ENCODE measurements at regions of chr1 and their contacts with region 1.

Region 1: DNA sequence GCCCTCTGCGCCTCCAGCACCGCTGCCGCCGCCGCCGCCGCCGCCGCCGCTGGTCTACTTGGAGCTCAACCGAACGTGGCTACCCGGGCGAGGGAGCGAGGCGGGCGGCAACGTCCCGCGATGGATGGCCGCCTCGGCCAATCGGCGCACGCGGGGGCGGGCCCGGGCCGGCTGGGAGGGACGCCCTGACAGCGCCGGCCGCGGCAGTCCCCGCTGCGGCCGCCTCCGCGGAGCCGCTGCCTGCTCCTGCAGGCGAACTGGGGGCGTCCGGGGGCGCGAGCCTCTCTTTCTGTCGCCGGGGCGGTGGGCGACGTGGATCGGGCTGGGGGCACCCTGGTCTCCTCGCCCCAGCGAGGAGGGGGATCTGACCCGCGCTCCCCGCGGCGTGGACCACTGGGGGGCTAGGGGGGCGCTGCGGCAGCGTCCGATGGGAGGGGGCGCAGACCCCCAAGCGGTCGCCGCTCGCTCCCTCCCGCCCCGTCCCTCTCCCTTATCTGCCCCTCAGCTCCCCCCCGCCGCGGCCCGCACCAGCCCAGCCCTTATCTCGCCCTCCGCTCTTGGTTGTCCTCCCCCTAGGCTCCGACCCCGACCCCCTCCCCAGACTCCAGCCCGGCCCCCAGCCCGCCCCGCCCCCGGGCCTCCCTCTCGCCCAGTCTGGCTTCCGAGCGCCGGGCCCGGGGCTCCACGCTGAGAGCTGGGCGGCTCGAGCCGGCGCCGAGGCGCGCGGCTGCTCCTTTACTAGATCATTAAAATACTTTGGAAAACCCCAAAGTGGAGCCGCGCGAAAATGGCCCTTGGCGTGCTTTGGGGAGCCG is at the start of gene SSBP3:
- DNase-seq: peak; percentile 95
- H3K4me3 ChIP-seq: peak within 1 kb of the TSS; percentile 75 to 99 (median 94)
- H3K27ac ChIP-seq: peak within 1 kb of the TSS; percentile 96 to 100 (median 98)
- H3K4me1 ChIP-seq: peaks cover 0 to 60% (median 47%) of the 10 kb centered on the region in 4 donors
- H3K27me3 ChIP-seq: no peaks in the 10 kb centered on the region
- CTCF ChIP-seq: no peak
- EP300 ChIP-seq: no peak
- POLR2A ChIP-seq: peak; percentile 62 to 70
- total RNA-seq, gene SSBP3: 27.4 to 38.5 (median 34.8) TPM

Region 2: GRCh38 chr1:54052934-54053744 is 353.4 kb before region 1 on chr1 and contains the starts of genes TCEANC2 and TMEM59:
- intact Hi-C with region 1: loop called (anchors 2 kb)
- DNase-seq: peak; percentile 99
- H3K4me3 ChIP-seq: peak within 1 kb of the TSS; percentile 87 to 93 (median 90)
- H3K27ac ChIP-seq: peak within 1 kb of the TSS; percentile 96 to 98 (median 97)
- H3K4me1 ChIP-seq: peaks cover 0 to 53% (median 45%) of the 10 kb centered on the region in 4 donors
- H3K27me3 ChIP-seq: no peaks in the 10 kb centered on the region
- CTCF ChIP-seq: peak in 1 of 4 experiments; percentile 18
- EP300 ChIP-seq: no peak
- POLR2A ChIP-seq: peak; percentile 55 to 63
- total RNA-seq, gene TCEANC2: 6.1 to 6.9 (median 6.6) TPM
- total RNA-seq, gene TMEM59: 114 to 299 (median 237) TPM

Region 3: GRCh38 chr1:54199765-54200518 is 206.6 kb before region 1 on chr1 and contains the starts of genes CYB5RL and MRPL37:
- intact Hi-C with region 1: loop called (anchors 2 kb)
- DNase-seq: peak; percentile 96
- H3K4me3 ChIP-seq: peak within 1 kb of the TSS; percentile 63 to 96 (median 84)
- H3K27ac ChIP-seq: peak within 1 kb of the TSS; percentile 80 to 87 (median 81)
- H3K4me1 ChIP-seq: peaks cover 0 to 36% (median 23%) of the 10 kb centered on the region in 4 donors
- H3K27me3 ChIP-seq: no peaks in the 10 kb centered on the region
- CTCF ChIP-seq: no peak
- EP300 ChIP-seq: no peak
- POLR2A ChIP-seq: peak in 1 of 2 donors; percentile 32
- total RNA-seq, gene CYB5RL: 2.6 to 5.7 (median 5.2) TPM
- total RNA-seq, gene MRPL37: 40.7 to 64.2 (median 55.8) TPM

Region 4: GRCh38 chr1:54364995-54365394 is 41.6 kb before region 1 on chr1:
- intact Hi-C with region 1: loop called (anchors 5 kb)
- DNase-seq: no peak
- H3K4me3 ChIP-seq: no peak overlapping the region
- H3K27ac ChIP-seq: no peak overlapping the region
- H3K4me1 ChIP-seq: peaks cover 0 to 36% (median 19%) of the 10 kb centered on the region in 4 donors
- H3K27me3 ChIP-seq: no peaks in the 10 kb centered on the region
- CTCF ChIP-seq: no peak
- EP300 ChIP-seq: no peak
- POLR2A ChIP-seq: no peak

Region 5: DNA sequence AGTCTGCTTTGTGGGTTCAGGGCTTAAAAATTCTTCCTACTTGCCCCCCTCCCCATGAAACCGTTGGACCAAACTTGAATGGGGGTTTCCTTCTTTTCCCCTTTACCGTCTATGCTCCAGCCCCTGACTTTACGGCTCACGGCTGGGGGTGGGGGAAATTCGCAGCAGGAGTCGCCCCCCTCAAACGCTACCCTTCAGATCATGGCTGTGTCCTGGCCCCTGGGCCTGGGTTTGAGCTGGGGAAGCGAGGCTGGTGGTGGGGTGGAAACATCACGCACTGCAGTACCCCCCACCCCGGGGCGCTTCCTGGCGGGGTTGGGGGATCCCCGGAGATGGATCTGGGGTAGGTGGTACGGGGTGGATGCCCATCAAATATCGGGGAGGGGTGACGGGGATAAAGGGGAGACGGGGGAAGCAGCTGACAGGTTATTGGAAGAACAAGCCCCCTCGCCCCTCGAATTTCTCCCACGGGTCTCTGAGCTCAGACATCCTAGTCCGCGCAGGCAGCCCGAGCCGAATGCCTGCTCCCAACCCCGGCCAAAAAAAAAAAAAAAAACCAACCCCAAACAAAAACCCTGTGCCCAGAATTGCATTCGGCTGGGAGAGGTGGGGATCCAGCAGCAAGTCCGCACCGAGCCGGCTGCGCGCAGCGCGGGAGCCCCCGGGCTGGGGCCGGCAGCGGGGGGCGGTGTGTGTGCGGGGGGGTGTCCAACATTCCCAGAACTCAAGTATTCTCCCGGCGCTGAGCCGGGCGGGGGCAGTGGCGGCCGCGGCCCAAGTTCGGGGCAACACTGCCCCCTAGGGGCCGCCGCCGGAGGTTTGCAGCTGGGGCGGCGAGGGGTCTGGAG is 82.5 kb after region 1 on chr1:
- intact Hi-C with region 1: loop called (anchors 1 kb)
- DNase-seq: peak; percentile 90
- H3K4me3 ChIP-seq: peak overlapping the region; percentile 55 to 59 (median 58)
- H3K27ac ChIP-seq: peak overlapping the region; percentile 91 to 97 (median 97)
- H3K4me1 ChIP-seq: peaks cover 0 to 53% (median 49%) of the 10 kb centered on the region in 4 donors
- H3K27me3 ChIP-seq: no peaks in the 10 kb centered on the region
- CTCF ChIP-seq: peak; percentile 92 to 96 (median 94)
- EP300 ChIP-seq: no peak
- POLR2A ChIP-seq: peak in 1 of 2 donors; percentile 1

Measured in sigmoid colon (tissue), 7 donors.